HCT116 (cell line): ENCODE measurements at regions of chr20 and their contacts with region 1.

Region 1: GRCh38 chr20:17569616-17570346 is at the start of gene DSTN:
- DNase-seq: peak; percentile 78
- ATAC-seq: peak; percentile 77
- H3K4me3 ChIP-seq: peak within 1 kb of the TSS; percentile 71 to 90
- H3K27ac ChIP-seq: peak within 1 kb of the TSS; percentile 98
- H3K4me1 ChIP-seq: peaks cover 37 to 53% of the 10 kb centered on the region in 2 experiments
- H3K27me3 ChIP-seq: no peaks in the 10 kb centered on the region
- CTCF ChIP-seq: no peak
- POLR2A ChIP-seq: peak; percentile 63
- RAD21 ChIP-seq: no peak
- total RNA-seq, gene DSTN: 202 TPM

Region 2: DNA sequence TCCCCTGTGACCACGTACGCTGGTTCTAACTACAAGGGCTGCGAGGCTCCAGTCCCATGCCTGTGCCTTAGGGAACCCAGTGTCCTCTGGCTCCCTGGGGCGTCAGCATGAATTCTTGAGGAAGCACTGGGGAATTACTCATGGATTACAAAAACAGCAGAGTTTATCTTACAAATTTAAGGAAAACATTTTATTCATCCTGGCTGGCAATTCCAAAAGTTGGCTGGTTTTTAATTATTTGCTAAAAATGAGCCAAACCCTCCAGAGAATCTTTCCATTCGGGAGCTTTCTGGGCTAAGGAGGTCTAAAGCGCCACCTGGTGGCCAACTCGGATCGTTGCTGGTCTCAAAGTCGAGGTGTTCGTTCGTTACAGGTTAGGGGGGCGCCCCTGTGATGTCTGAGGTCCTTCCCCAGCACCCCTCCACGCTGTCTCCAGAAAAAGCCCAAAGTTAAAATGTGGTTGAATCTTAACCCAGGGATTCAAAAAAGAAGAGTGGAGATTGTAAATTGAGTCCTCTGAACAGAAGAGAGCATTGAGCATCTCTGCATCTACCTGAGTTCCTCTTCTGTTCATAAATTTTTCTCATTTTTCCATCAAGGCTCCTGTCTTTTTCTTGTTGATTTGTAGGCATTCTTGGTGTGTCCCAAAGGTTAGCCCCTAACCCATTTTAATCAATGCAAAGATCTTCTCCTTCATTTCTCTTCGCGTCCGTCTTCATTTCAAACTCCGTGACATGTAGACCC is 138.0 kb before region 1 on chr20:
- CTCF ChIA-PET with region 1: no interaction called
- POLR2A ChIA-PET with region 1: no interaction called
- RAD21 ChIA-PET with region 1: no interaction called
- intact Hi-C with region 1: no loop called
- DNase-seq: peak; percentile 19
- ATAC-seq: peak; percentile 80
- H3K4me3 ChIP-seq: no peak overlapping the region
- H3K27ac ChIP-seq: no peak overlapping the region
- H3K4me1 ChIP-seq: no peaks in the 10 kb centered on the region
- H3K27me3 ChIP-seq: peaks cover 17% of the 10 kb centered on the region
- CTCF ChIP-seq: peak; percentile 68 to 94 (median 86); a peak in 5 of 6 replicates
- POLR2A ChIP-seq: no peak
- RAD21 ChIP-seq: peak; percentile 74

Region 3: GRCh38 chr20:17558154-17558940 is 11.4 kb before region 1 on chr20:
- CTCF ChIA-PET with region 1: interaction called, 3 read pairs
- POLR2A ChIA-PET with region 1: interaction called, 38 read pairs
- RAD21 ChIA-PET with region 1: interaction called in 1 of 2 experiments, 4 read pairs
- intact Hi-C with region 1: loop called (anchors 1 kb)
- DNase-seq: peak; percentile 88
- ATAC-seq: peak; percentile 81
- H3K4me3 ChIP-seq: peak overlapping the region; percentile 46 to 56
- H3K27ac ChIP-seq: peak overlapping the region; percentile 91
- H3K4me1 ChIP-seq: peaks cover 46 to 71% of the 10 kb centered on the region in 2 experiments
- H3K27me3 ChIP-seq: no peaks in the 10 kb centered on the region
- CTCF ChIP-seq: no peak
- POLR2A ChIP-seq: peak; percentile 66
- RAD21 ChIP-seq: 0 out of 2 replicates have a peak, but pooled peaks have one; percentile 17

Region 4: GRCh38 chr20:17671565-17671964 is 101.8 kb after region 1 on chr20:
- CTCF ChIA-PET with region 1: no interaction called
- POLR2A ChIA-PET with region 1: no interaction called
- RAD21 ChIA-PET with region 1: no interaction called
- intact Hi-C with region 1: no loop called
- DNase-seq: no peak
- ATAC-seq: no peak
- H3K4me3 ChIP-seq: no peak overlapping the region
- H3K27ac ChIP-seq: no peak overlapping the region
- H3K4me1 ChIP-seq: no peaks in the 10 kb centered on the region
- H3K27me3 ChIP-seq: no peaks in the 10 kb centered on the region
- CTCF ChIP-seq: no peak
- POLR2A ChIP-seq: no peak
- RAD21 ChIP-seq: no peak